Activated CD4-positive, alpha-beta T cell treated with anti-CD3 and anti-CD28 coated beads for 36 hours (primary cell): ENCODE measurements at regions of chr14 and their contacts with region 1.

Region 1: GRCh38 chr14:104752735-104753531 is at the start of gene SIVA1:
- DNase-seq: peak; percentile 100
- ATAC-seq: peak; percentile 92
- H3K4me3 Mint-ChIP-seq: peak within 1 kb of the TSS; percentile 84
- H3K27ac Mint-ChIP-seq: peak within 1 kb of the TSS; percentile 83
- H3K4me1 Mint-ChIP-seq: peaks cover 33% of the 10 kb centered on the region
- H3K27me3 Mint-ChIP-seq: no peaks in the 10 kb centered on the region
- total RNA-seq, gene SIVA1: 47.1 to 97.1 TPM

Region 2: GRCh38 chr14:103628684-103629502 is 1124.0 kb before region 1 on chr14 and contains the start of gene KLC1:
- CTCF ChIA-PET with region 1: no interaction called
- POLR2A ChIA-PET with region 1: no interaction called
- intact Hi-C with region 1: loop called in 1 of 2 experiments (anchors 2 kb)
- DNase-seq: peak; percentile 92
- ATAC-seq: peak; percentile 77
- H3K4me3 Mint-ChIP-seq: peak within 1 kb of the TSS; percentile 87
- H3K27ac Mint-ChIP-seq: peak within 1 kb of the TSS; percentile 81
- H3K4me1 Mint-ChIP-seq: peaks cover 35% of the 10 kb centered on the region
- H3K27me3 Mint-ChIP-seq: no peaks in the 10 kb centered on the region
- total RNA-seq, gene KLC1: 97.4 to 113 TPM

Region 3: DNA sequence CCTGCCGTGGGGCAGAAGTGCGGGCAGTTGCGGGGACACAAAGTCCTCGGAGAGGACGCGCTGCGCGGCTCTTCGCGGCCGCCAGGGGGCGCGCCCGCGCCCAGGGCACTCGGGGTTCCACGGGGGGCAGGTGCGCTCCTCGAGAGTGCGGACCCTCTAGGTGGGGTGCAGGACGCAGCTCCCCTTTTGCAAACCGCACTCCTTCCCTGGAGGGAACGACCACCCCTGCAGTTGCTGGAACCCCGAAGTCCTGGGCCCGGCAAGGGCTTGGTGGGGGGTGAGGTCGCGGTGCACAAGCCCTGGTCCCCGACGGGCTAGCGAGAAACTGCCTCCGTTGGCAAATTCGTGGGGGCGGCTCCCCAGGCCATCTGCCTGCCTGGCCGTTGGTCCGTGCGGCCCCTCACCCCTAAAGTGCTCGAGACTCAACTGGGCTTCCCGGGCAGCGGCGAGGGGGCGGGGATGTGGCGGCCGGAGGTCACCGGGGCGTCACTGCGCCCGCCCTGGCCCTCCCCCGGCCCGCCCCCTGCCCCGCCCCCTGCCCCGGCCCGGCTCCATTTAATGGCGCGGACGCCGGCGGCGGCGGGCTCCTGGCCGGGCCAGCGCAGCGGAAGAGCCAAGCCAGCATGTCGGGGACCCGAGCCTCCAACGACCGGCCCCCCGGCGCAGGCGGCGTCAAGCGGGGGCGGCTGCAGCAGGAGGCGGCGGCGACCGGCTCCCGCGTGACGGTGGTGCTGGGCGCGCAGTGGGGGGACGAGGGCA is 29.1 kb before region 1 on chr14 and contains the start of gene ADSS1:
- CTCF ChIA-PET with region 1: interaction called, 6 read pairs
- POLR2A ChIA-PET with region 1: no interaction called
- intact Hi-C with region 1: loop called in 1 of 2 experiments (anchors 1 kb)
- DNase-seq: peak; percentile 73
- ATAC-seq: peak; percentile 72
- H3K4me3 Mint-ChIP-seq: peak within 1 kb of the TSS; percentile 57
- H3K27ac Mint-ChIP-seq: no peak within 1 kb of the TSS
- H3K4me1 Mint-ChIP-seq: no peaks in the 10 kb centered on the region
- H3K27me3 Mint-ChIP-seq: no peaks in the 10 kb centered on the region
- total RNA-seq, gene ADSS1: 2.2 to 3.2 TPM

Region 4: GRCh38 chr14:104865644-104866441 is 112.9 kb after region 1 on chr14:
- CTCF ChIA-PET with region 1: no interaction called
- POLR2A ChIA-PET with region 1: no interaction called
- intact Hi-C with region 1: loop called in 1 of 2 experiments (anchors 1 kb)
- DNase-seq: peak; percentile 62
- ATAC-seq: peak; percentile 57
- H3K4me3 Mint-ChIP-seq: peak overlapping the region; percentile 60
- H3K27ac Mint-ChIP-seq: no peak overlapping the region
- H3K4me1 Mint-ChIP-seq: peaks cover 2% of the 10 kb centered on the region
- H3K27me3 Mint-ChIP-seq: peaks cover 7% of the 10 kb centered on the region

Region 5: GRCh38 chr14:105020815-105021655 is 268.1 kb after region 1 on chr14 and contains the start of gene CDCA4:
- CTCF ChIA-PET with region 1: interaction called, 3 read pairs
- POLR2A ChIA-PET with region 1: interaction called, 8 read pairs
- intact Hi-C with region 1: loop called in 1 of 2 experiments (anchors 1 kb)
- DNase-seq: peak; percentile 99
- ATAC-seq: peak; percentile 82
- H3K4me3 Mint-ChIP-seq: peak within 1 kb of the TSS; percentile 94
- H3K27ac Mint-ChIP-seq: peak within 1 kb of the TSS; percentile 93
- H3K4me1 Mint-ChIP-seq: peaks cover 72% of the 10 kb centered on the region
- H3K27me3 Mint-ChIP-seq: no peaks in the 10 kb centered on the region
- total RNA-seq, gene CDCA4: 52.0 to 62.7 TPM

Region 6: DNA sequence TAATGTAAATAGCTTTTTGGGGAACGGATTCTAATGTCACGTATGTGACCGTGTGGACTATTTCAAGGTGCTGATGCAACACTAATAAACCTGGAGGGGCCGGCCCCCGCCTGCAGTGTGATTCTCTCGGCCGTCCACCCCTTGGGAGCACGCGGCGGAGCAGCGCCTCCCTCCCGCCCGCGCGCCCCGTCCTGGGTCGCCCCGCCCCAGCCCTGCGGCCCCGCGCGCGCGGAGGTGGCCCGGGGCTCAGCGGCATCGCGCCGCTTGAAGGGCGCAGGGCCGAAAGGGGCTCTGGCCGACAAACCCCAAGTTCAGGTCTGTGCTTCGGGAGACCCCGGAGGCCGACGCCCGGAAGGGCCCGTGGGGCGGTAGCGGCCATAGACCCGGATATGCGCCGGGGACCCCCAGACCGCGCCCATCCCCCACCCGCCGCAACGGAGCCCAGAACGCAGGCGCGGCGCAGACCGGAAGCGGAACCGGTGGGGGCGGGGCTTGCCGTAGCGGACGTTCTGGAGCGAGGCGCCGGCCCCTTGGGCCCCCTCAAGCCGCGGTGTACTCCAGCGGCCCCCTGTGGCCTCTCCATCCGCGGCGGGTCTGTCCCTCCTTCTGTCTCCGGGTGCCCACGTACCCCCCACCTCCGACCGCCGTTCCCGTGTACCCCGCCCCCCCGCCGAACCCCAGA is 645.3 kb after region 1 on chr14 and contains the start of gene TEX22:
- CTCF ChIA-PET with region 1: no interaction called
- POLR2A ChIA-PET with region 1: no interaction called
- intact Hi-C with region 1: loop called in 1 of 2 experiments (anchors 1 kb)
- DNase-seq: peak; percentile 94
- ATAC-seq: peak; percentile 86
- H3K4me3 Mint-ChIP-seq: peak within 1 kb of the TSS; percentile 85
- H3K27ac Mint-ChIP-seq: peak within 1 kb of the TSS; percentile 91
- H3K4me1 Mint-ChIP-seq: peaks cover 11% of the 10 kb centered on the region
- H3K27me3 Mint-ChIP-seq: no peaks in the 10 kb centered on the region
- total RNA-seq, gene TEX22: 1.4 to 2.4 TPM